ENCODE measurements at regions of chr16 and their contacts with region 1.

Region 1: DNA sequence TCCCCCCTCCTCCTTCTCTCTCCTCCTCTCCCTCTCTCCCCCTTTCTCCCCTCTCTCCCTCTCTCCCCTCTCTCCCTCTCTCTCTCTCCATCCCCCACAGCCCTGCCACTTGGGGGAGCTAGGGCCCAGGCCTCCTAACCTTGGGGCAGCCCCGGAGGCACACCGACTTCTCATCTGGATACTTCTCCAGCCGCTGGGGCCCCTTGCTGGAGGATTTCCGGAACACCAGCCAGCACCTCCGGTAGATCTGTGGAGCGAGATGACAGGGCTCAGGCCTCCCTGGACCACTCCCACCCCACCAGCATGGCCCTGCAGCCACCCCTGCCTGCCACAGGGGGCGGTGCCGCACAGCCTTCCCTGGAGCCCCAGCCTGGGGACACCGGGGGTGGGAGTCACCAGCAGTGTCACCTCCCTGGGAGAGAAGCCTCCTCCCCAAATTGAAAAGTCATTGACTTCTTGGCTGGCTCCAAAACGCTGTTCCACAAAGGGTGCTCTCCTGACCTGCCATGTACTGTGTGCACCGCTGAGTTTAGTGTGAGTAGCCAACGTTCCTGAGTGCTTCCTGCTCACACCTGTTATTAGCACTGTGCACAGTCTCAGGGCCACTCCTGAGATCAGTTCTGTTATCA is 10.5 kb downstream of the DOK4 start:
- DNase-seq: peak; percentile 90
- ATAC-seq: peak; percentile 98
- H3K4me3 Mint-ChIP-seq: peak overlapping the region; percentile 34
- H3K27ac Mint-ChIP-seq: peak overlapping the region; percentile 68
- H3K4me1 Mint-ChIP-seq: peaks cover 31% of the 10 kb centered on the region
- H3K27me3 Mint-ChIP-seq: no peaks in the 10 kb centered on the region

Region 2: GRCh38 chr16:57260294-57260929 is 215.4 kb before region 1 on chr16:
- CTCF ChIA-PET with region 1: no interaction called
- POLR2A ChIA-PET with region 1: no interaction called
- DNase-seq: peak; percentile 49
- ATAC-seq: peak; percentile 50
- H3K4me3 Mint-ChIP-seq: peak overlapping the region; percentile 40
- H3K27ac Mint-ChIP-seq: peak overlapping the region; percentile 82
- H3K4me1 Mint-ChIP-seq: peaks cover 28% of the 10 kb centered on the region
- H3K27me3 Mint-ChIP-seq: no peaks in the 10 kb centered on the region

Region 3: DNA sequence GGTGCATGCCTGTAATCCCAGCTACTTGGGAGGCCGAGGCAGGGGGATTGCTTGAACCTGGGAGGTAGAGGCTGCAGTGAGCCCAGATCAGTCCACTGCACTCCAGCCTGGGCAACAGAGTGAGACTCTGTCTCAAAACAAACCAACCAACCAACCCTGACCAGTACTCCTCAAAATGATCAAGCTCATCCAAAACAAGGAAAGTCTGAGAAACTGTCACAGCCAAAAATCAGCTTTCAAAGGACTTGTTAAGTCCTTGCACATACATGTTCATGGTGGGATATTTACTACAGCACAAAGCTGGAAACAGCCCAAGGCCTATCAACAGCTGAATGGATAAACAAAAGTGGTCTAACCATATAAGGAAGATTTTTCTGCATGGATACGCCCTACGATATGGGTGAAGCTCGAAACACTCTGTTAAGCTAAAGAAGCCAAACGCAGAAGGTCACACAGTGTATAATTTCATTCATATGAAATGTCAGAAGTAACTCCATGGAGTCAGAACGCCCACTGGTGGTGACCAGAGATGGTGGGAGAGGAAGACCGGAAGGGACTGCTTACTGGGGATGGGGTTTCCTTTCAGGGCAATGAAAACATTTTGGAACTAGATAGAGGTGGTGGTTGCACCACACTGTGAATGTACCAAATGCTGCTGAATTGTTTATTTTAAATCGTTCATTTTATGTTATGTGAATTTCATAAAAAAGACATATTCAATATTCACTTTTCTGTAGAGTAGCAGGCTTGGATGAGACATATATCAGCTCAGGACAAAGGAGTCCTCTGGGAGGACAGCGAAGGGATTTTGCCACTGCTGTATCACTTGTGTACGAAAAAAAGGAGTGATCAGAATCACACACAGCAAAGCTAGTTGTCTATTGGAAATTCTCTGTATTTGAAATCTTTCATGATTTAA is 53.5 kb before region 1 on chr16:
- CTCF ChIA-PET with region 1: interaction called, 12 read pairs
- POLR2A ChIA-PET with region 1: no interaction called
- DNase-seq: no peak
- ATAC-seq: no peak
- H3K4me3 Mint-ChIP-seq: no peak overlapping the region
- H3K27ac Mint-ChIP-seq: no peak overlapping the region
- H3K4me1 Mint-ChIP-seq: peaks cover 18% of the 10 kb centered on the region
- H3K27me3 Mint-ChIP-seq: no peaks in the 10 kb centered on the region

Region 4: GRCh38 chr16:57462209-57462977 is 13.4 kb before region 1 on chr16 and contains the start of gene POLR2C:
- CTCF ChIA-PET with region 1: interaction called, 28 read pairs
- POLR2A ChIA-PET with region 1: interaction called, 14 read pairs
- DNase-seq: peak; percentile 95
- ATAC-seq: peak; percentile 97
- H3K4me3 Mint-ChIP-seq: peak within 1 kb of the TSS; percentile 100
- H3K27ac Mint-ChIP-seq: peak within 1 kb of the TSS; percentile 100
- H3K4me1 Mint-ChIP-seq: peaks cover 29% of the 10 kb centered on the region
- H3K27me3 Mint-ChIP-seq: no peaks in the 10 kb centered on the region
- total RNA-seq, gene POLR2C: 57.0 to 58.3 TPM

Region 5: GRCh38 chr16:57485916-57486857 is 10.4 kb after region 1 on chr16 and contains the start of gene DOK4:
- CTCF ChIA-PET with region 1: interaction called, 23 read pairs
- POLR2A ChIA-PET with region 1: interaction called, 3 read pairs
- DNase-seq: peak; percentile 82
- ATAC-seq: peak; percentile 99
- H3K4me3 Mint-ChIP-seq: peak within 1 kb of the TSS; percentile 76
- H3K27ac Mint-ChIP-seq: peak within 1 kb of the TSS; percentile 76
- H3K4me1 Mint-ChIP-seq: peaks cover 19% of the 10 kb centered on the region
- H3K27me3 Mint-ChIP-seq: peaks cover 5% of the 10 kb centered on the region
- total RNA-seq, gene DOK4: 4.8 to 6.4 TPM

Region 6: DNA sequence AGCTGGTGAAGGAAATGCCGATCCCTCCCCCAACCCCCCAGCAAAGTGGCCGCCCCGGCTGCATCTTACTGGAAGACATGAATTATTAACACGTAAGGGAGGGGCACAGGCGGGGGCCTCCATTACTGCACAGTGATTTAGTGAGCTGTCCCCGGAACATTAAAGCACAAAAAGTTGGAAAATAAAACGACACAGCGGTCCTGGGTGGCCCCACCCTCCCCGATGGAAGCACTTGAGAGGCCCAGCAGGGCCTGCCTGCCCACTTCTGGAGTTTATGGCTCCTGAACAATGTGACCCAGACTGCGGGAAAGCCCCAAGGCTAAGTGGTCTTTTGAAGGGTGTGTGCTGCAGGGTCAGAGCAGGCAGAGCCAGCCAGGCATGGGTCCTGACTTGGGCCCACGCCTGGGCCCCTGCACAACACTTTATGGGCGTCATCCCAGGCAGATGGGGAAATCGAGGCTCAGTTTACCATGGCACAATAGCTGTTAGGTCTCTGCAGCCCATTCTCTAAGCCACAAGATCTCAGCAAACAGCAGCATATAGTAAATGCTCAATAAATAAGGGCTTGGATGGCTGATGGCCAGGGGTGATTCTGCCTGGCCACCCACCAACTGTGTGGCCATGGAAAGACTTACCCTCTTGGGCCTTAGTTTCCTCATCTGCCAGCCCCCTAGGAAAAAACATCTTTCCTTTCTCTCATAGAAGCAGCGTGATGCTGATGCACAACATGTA is 37.7 kb after region 1 on chr16:
- CTCF ChIA-PET with region 1: interaction called, 12 read pairs
- POLR2A ChIA-PET with region 1: no interaction called
- DNase-seq: no peak
- ATAC-seq: no peak
- H3K4me3 Mint-ChIP-seq: no peak overlapping the region
- H3K27ac Mint-ChIP-seq: no peak overlapping the region
- H3K4me1 Mint-ChIP-seq: no peaks in the 10 kb centered on the region
- H3K27me3 Mint-ChIP-seq: no peaks in the 10 kb centered on the region

Region 7: DNA sequence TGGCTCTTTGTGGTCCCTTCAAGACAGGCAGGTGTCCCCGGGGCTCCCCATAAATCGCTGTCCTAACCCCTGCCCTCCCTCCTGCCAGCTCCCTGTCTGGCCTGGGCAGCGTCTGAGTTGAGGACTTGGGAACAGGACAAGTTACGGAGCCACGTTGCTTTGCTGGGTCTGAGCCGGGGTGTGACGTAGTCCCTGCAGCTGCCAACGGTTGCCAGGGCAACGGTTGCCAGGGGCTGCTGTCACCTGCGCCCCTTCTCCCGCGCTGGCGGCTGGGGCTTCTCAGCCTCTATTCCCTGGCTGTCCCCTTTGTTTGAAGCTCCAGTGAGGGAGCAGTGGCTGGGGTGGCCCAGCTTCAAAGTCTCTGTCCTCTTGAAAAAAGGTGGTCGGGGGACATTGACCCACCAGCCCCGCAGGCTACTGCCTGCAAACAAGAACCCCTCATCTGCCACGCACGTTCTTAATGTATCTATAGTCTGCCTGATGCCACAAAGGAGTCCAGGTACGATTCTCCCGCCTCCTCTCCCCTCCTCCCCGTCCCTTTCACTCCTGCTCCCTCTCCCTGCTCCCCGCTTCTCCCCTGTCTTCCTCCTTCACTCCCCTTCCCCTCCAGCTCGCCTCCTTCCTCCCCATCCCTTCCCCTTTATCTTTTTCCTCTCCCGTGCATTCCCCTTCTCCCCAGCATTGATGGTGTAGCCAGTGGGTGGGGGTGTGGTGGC is 163.5 kb after region 1 on chr16:
- CTCF ChIA-PET with region 1: no interaction called
- POLR2A ChIA-PET with region 1: no interaction called
- DNase-seq: peak; percentile 32
- ATAC-seq: peak; percentile 62
- H3K4me3 Mint-ChIP-seq: no peak overlapping the region
- H3K27ac Mint-ChIP-seq: no peak overlapping the region
- H3K4me1 Mint-ChIP-seq: peaks cover 6% of the 10 kb centered on the region
- H3K27me3 Mint-ChIP-seq: peaks cover 11% of the 10 kb centered on the region